ENCODE measurements at regions of chr20 and their contacts with region 1.

Region 1: GRCh38 chr20:48620519-48621254 is 207.1 kb downstream of the PREX1 start:
- DNase-seq: no peak
- H3K4me3 ChIP-seq: peak overlapping the region; percentile 42
- CTCF ChIP-seq: peak; percentile 93

Region 2: DNA sequence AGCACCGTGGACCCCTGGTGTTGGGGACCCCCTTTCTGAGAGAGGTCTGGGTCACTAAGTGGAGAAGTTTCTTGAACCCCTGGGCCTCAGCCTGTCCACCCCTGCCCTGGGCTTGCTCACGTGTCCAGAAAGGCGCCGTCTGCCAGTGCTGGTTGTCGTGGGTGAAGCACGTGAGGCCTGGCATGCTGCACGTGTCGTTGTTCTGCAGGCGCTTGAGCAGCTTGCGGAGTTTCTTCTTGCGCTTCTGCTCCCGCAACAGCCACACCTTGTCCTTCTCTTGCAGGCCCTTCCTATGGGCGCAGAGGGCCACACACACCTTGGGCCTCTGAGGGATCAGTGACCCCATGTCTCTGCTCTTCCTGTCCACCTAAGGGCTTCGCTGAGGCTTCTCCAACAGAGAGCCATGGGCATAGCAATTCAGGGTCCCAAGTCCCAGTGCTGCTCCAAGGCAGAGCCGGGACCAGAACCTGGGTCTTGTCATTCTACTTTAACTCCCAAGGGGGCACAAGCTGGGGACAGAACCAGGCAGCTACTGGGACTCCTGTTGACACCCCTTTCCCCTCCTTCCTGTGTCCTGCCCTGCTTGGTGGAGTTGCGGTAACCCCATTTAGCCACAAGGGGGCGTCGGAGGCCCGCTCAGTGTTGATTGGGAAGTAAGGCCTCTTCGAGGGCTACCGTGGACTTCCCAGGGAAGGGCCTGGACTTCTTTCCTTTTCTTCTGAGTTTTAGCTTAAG is 957.2 kb before region 1 on chr20:
- CTCF ChIA-PET with region 1: interaction called, 422 read pairs
- POLR2A ChIA-PET with region 1: no interaction called
- DNase-seq: no peak
- H3K4me3 ChIP-seq: no peak overlapping the region
- CTCF ChIP-seq: peak; percentile 93

Region 3: DNA sequence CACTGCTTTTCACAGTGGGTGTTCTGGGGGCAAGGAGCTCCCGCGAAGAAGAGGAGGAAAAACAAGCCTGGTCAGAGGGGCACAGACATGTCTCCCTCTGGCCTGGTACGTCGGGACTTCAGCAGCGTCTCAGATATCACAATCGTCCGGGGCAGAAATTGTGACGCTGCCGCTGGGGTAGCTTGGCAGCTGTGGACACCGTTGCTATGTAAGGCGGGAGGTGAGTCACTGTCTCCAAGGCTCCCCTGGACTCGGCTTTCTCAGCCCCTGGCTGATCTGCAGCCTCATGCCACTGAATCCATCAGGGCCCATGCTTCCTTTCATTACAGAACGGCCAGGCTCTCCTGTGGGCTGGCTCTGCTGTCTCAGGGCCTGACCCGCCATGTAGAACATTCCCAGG is 934.1 kb before region 1 on chr20:
- CTCF ChIA-PET with region 1: interaction called, 235 read pairs
- POLR2A ChIA-PET with region 1: no interaction called
- DNase-seq: no peak
- H3K4me3 ChIP-seq: no peak overlapping the region
- CTCF ChIP-seq: no peak

Region 4: DNA sequence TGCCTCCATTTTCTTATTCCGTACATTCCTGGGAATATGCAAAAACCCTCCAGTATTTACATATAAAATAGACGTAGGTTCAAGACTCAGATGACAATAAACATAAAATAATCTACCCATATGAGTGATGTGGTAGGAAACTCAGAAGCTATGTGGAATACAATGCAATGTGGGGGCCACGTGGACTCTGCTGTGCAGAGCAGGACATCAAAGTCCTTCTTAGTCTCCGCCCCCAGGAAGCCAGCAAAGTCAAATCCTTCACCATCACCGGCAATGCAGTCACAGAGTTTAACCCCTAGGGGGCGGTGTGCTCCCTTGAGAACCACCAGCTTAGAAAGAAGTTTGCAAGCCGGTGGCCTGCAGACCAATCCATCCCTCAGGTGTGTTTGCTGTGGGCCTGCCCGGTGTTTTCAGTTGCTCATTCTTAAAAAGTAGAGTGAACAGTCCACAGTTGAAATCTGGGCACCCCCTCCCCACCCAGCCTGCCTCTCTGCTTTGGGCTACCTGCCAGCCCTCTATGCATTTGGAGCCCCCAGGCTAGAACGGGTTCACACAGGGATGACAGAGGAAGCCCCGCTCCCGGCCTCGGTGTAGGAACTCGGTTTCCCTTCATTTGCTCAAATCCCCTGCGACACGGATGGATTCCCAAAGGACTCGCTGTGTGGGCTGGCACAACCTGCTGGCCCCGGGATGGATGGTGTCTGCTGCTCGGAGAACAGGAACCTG is 895.3 kb before region 1 on chr20:
- CTCF ChIA-PET with region 1: interaction called, 54 read pairs
- POLR2A ChIA-PET with region 1: no interaction called
- DNase-seq: no peak
- H3K4me3 ChIP-seq: no peak overlapping the region
- CTCF ChIP-seq: peak; percentile 85

Region 5: DNA sequence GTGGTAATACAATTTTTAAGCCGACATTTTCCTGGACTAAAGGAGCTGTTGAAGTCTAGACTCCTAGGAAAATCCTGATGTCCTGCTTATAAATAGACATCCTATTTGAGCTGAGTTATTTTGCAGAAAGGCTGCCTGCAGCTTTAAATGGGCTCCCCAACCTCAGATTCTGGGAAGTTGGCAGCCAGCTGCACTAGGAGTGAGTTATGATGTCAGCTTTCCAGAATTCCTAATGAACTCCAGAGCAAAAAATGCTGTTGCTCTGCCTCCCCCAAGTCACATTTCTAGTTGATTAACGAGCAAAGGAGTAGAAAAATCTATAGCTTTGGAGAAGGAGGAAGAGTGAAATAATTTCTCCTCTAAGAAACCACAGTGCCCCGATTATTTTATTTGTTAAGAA is 489.1 kb before region 1 on chr20:
- CTCF ChIA-PET with region 1: interaction called, 10 read pairs
- POLR2A ChIA-PET with region 1: no interaction called
- DNase-seq: peak; percentile 16
- H3K4me3 ChIP-seq: no peak overlapping the region
- CTCF ChIP-seq: no peak

Region 6: DNA sequence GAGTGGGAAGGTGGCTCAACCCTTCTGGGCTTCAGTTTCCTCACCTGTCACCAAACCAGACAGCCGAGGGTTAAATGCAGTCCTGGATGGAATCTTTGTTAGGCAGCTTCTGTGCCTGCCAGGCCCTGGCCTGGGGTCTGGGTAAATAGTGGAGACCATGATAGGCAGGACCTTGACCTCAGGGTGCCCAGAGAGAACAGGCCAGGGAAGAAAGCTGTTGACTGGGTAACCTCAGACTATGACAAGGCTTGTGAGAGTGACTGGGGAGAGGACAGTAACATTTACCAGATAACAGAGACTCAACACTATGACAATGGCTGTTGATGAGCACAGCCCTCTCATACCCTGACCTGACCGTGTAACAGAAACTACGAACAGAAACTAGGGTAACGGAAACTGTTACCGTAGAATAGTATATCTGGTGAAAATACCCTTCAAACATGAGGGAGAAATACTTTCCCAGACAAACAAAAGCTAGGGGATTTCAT is 11.2 kb before region 1 on chr20:
- CTCF ChIA-PET with region 1: interaction called, 19 read pairs
- POLR2A ChIA-PET with region 1: no interaction called
- DNase-seq: no peak
- H3K4me3 ChIP-seq: no peak overlapping the region
- CTCF ChIP-seq: no peak

Region 7: GRCh38 chr20:48807661-48808427 is 187.2 kb after region 1 on chr20:
- CTCF ChIA-PET with region 1: no interaction called
- POLR2A ChIA-PET with region 1: no interaction called
- DNase-seq: no peak
- H3K4me3 ChIP-seq: no peak overlapping the region
- CTCF ChIP-seq: no peak